ENCODE measurements at regions of chr11 and their contacts with region 1.

Region 1: DNA sequence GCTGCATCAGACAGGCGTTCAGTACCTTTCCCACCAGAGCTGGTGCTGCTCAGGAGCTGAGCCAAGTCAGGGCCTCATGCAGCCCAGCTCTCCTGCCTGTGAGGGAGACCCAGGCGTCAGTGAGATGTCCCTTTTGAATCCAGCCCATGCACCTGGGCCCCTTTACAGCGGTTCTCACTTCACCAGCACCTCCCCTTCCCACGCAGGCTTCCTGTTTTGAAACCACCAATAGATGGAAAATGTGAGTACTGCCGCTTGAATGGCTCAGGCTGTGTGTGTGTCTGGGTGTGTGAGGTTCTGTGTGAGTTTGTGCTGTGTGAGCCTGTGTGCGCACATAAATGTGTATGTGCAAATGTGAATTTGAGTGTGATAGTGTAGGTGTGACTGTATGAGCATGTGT is 88.4 kb downstream of the UBASH3B start:
- DNase-seq: peak; percentile 19 to 86 (median 73)
- ATAC-seq: peak; percentile 46
- H3K4me3 ChIP-seq: peak overlapping the region; percentile 24 to 40
- H3K4me3 Mint-ChIP-seq: no peak overlapping the region
- H3K27ac ChIP-seq: peak overlapping the region; percentile 46 to 70
- H3K27ac Mint-ChIP-seq: no peak overlapping the region
- H3K4me1 ChIP-seq: peaks cover 71% of the 10 kb centered on the region
- H3K4me1 Mint-ChIP-seq: peaks cover 15% of the 10 kb centered on the region
- H3K27me3 ChIP-seq: no peaks in the 10 kb centered on the region
- H3K27me3 Mint-ChIP-seq: no peaks in the 10 kb centered on the region
- CTCF ChIP-seq: no peak

Region 2: DNA sequence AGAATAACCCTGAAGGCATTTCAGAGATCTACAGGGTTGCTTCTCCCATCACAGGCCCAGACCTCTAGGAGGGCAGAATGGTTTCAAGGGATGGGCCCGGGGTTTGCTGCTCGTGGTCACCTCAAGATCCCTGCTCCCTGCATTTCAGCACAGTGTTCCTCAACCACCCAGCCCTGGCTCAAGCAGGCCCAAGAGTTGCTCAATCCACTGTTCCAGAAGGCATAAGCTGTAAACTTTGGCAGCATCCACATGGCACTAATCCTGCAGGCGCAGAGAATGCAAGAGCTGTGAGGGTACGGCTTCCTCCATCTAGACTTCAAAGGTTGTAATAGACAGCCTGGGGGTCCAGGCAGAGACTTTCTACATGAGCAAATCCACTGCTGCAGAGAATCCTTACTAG is 313.5 kb before region 1 on chr11:
- CTCF ChIA-PET with region 1: no interaction called
- POLR2A ChIA-PET with region 1: no interaction called
- intact Hi-C with region 1: no loop called
- DNase-seq: no peak
- ATAC-seq: no peak
- H3K4me3 ChIP-seq: no peak overlapping the region
- H3K4me3 Mint-ChIP-seq: no peak overlapping the region
- H3K27ac ChIP-seq: no peak overlapping the region
- H3K27ac Mint-ChIP-seq: no peak overlapping the region
- H3K4me1 ChIP-seq: no peaks in the 10 kb centered on the region
- H3K4me1 Mint-ChIP-seq: no peaks in the 10 kb centered on the region
- H3K27me3 ChIP-seq: no peaks in the 10 kb centered on the region
- H3K27me3 Mint-ChIP-seq: peaks cover 6% of the 10 kb centered on the region
- CTCF ChIP-seq: no peak

Region 3: DNA sequence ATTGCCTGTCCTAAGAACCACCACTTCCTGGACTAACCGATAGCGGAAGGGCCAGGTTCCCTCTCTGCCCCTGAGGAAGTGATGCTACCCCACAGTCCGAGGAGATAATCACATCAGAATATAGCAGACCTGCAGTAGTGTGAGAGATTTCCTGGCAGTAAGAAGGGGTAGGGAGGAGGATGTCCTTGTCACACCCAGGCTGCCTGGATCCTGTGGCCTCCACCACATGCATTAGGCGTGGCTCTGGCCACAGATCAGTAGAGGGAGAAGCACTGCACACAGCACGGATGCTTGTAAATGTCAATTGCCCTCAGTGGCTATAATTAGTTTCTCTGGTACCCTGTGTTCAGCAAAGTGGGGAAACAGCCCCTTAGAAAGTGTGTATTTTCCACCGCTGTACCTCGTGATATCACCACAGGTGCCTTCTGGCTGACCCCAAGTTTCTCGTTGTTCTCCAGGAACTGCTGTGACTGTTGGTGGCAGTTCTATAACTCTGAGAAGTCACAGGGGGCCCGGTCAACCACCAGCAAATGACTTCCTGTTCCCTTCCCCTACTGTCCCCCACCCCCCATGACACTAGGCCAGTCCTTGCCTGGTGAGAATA is 26.6 kb before region 1 on chr11:
- CTCF ChIA-PET with region 1: interaction called, 4 read pairs
- POLR2A ChIA-PET with region 1: interaction called, 3 read pairs
- intact Hi-C with region 1: loop called in 1 of 2 experiments (anchors 1 kb)
- DNase-seq: peak in 8 of 9 experiments; percentile 20 to 68 (median 47)
- ATAC-seq: peak; percentile 61
- H3K4me3 ChIP-seq: no peak overlapping the region
- H3K4me3 Mint-ChIP-seq: peak overlapping the region; percentile 56
- H3K27ac ChIP-seq: peak overlapping the region; percentile 23 to 55
- H3K27ac Mint-ChIP-seq: peak overlapping the region; percentile 91
- H3K4me1 ChIP-seq: peaks cover 69% of the 10 kb centered on the region
- H3K4me1 Mint-ChIP-seq: peaks cover 80% of the 10 kb centered on the region
- H3K27me3 ChIP-seq: no peaks in the 10 kb centered on the region
- H3K27me3 Mint-ChIP-seq: no peaks in the 10 kb centered on the region
- CTCF ChIP-seq: no peak

Region 4: DNA sequence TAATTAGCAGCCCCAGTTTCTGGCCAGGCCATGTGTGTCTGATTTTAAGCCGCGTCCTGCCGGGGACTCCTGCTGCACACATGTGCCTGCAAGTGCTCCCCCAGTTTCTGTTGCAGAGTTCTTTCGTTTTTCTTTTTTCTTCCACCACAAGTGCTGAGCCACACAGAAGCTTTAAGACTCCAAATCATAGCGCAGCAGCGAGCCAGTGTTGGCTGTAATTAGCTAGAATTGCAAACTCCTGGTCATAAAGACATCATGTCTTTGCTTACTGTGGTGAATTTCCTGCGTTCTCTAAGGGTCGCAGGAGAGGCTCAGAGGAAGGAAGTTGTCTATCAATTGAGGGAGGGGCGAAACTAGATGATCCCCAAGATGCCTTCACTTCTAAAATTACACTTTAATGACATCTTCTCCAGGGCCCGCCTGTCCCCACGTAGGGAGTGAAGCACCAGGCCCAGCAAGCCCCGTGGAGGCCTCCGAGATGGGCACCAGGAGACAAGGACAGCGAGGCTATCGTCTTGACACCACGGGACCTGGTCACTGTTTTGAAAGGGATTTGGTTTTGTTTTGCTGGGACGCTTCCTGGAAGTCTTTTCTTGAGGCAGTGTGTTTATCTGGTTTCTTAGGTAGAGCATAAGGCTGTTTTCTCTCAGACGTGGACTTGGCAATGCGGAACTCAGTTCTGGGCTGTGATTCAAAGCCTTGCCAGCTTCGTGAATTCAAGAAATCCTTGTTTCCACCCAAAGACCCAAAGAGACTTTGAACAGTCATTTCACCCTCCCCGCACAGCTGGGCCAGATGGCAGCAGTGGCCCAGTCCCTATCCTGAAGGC is 16.6 kb before region 1 on chr11:
- CTCF ChIA-PET with region 1: interaction called, 15 read pairs
- POLR2A ChIA-PET with region 1: interaction called, 10 read pairs
- intact Hi-C with region 1: loop called in 1 of 2 experiments (anchors 1 kb)
- DNase-seq: peak in 8 of 9 experiments; percentile 6 to 67 (median 39)
- ATAC-seq: peak; percentile 74
- H3K4me3 ChIP-seq: peak overlapping the region; percentile 3 to 28
- H3K4me3 Mint-ChIP-seq: peak overlapping the region; percentile 80
- H3K27ac ChIP-seq: peak overlapping the region; percentile 56 to 74
- H3K27ac Mint-ChIP-seq: peak overlapping the region; percentile 98
- H3K4me1 ChIP-seq: peaks cover 66% of the 10 kb centered on the region
- H3K4me1 Mint-ChIP-seq: peaks cover 80% of the 10 kb centered on the region
- H3K27me3 ChIP-seq: no peaks in the 10 kb centered on the region
- H3K27me3 Mint-ChIP-seq: no peaks in the 10 kb centered on the region
- CTCF ChIP-seq: no peak

Measured in CD8-positive, alpha-beta T cell (primary cell).